ENCODE measurements at regions of chr16 and their contacts with region 1.

Region 1: DNA sequence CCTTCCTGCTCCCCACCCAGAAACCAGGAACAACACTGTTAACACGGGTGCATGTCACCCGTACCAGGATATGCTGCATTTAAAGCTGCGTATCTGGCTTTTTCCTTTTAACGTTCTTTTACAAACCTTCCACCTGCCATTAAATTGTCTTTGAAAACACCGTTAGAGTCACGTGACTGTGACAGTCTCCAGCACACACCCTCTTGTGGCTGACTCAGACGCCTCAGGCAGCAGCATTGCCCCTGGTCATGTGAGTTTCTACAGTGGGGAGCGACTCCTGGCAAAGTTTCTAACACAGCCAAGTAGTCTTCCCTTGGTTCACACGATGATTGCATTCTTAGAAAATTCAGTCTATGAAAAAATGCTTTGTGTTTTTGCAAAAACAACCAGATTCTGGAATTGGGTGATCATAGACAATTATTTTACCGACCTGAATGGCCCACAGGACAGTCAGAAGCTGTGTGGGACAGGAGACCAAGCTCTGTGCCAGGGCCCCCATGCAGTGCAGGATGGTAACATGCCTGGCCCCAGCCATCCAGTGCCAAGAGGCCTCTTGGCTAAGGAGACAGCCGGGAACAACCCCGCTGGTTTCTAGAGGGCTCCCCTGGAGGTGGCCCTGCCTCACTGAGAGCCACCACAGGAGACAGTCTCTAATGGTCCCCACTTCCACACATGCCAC is 199.1 kb downstream of the KATNIP start:
- DNase-seq: peak; percentile 58
- ATAC-seq: peak; percentile 83
- H3K4me3 Mint-ChIP-seq: no peak overlapping the region
- H3K27ac Mint-ChIP-seq: no peak overlapping the region
- H3K4me1 Mint-ChIP-seq: peaks cover 3% of the 10 kb centered on the region
- H3K27me3 Mint-ChIP-seq: no peaks in the 10 kb centered on the region

Region 2: GRCh38 chr16:27766236-27766925 is 17.4 kb after region 1 on chr16:
- CTCF ChIA-PET with region 1: no interaction called
- POLR2A ChIA-PET with region 1: no interaction called
- intact Hi-C with region 1: loop called in 1 of 2 experiments (anchors 2 kb)
- DNase-seq: no peak
- ATAC-seq: no peak
- H3K4me3 Mint-ChIP-seq: no peak overlapping the region
- H3K27ac Mint-ChIP-seq: no peak overlapping the region
- H3K4me1 Mint-ChIP-seq: no peaks in the 10 kb centered on the region
- H3K27me3 Mint-ChIP-seq: no peaks in the 10 kb centered on the region

Region 3: GRCh38 chr16:27951489-27952120 is 202.6 kb after region 1 on chr16:
- CTCF ChIA-PET with region 1: no interaction called
- POLR2A ChIA-PET with region 1: no interaction called
- intact Hi-C with region 1: no loop called
- DNase-seq: no peak
- ATAC-seq: no peak
- H3K4me3 Mint-ChIP-seq: no peak overlapping the region
- H3K27ac Mint-ChIP-seq: no peak overlapping the region
- H3K4me1 Mint-ChIP-seq: no peaks in the 10 kb centered on the region
- H3K27me3 Mint-ChIP-seq: peaks cover 18% of the 10 kb centered on the region

Measured in activated CD4-positive, alpha-beta T cell treated with anti-CD3 and anti-CD28 coated beads for 36 hours (primary cell).